Psoas muscle (tissue), 8 donors: ENCODE measurements at regions of chr9 and their contacts with region 1.

Region 1: GRCh38 chr9:34413231-34413852 is 36.6 kb upstream of the MYORG start:
- DNase-seq: peak in 1 of 2 donors; percentile 44
- ATAC-seq: peak in 3 of 4 donors; percentile 62 to 68 (median 64)
- H3K4me3 ChIP-seq: no peak overlapping the region
- H3K27ac ChIP-seq: no peak overlapping the region
- H3K4me1 ChIP-seq: peaks cover 4% of the 10 kb centered on the region
- H3K27me3 ChIP-seq: no peaks in the 10 kb centered on the region
- CTCF ChIP-seq: no peak

Region 2: DNA sequence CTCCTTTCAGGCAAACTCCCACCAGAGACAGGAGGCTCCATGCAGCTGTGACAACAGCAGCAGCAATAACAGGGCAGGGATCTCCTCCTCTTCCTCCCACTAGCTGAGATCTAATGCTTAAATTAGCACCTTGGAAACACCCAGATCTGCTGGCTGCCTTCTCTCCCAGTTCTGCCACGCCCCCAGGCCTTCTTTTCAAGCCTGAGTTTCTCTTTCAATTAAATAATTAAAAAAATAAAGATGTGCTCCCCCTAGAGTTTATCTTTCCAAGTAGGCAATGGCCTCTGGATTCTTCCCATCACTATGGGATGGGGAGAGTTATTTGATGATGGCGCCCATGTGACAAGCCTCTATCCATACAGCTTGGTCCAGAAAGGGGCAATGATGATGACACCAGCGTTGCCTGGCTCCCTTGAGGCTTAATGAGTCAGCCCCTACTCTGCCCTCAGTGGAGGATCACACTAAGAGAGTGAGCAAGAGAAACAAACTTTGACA is 41.3 kb after region 1 on chr9:
- intact Hi-C with region 1: loop called in 1 of 2 experiments (anchors 5 kb)
- DNase-seq: peak; percentile 56 to 68
- ATAC-seq: peak in 3 of 4 donors; percentile 41 to 69 (median 55)
- H3K4me3 ChIP-seq: no peak overlapping the region
- H3K27ac ChIP-seq: peak overlapping the region; percentile 91
- H3K4me1 ChIP-seq: peaks cover 82% of the 10 kb centered on the region
- H3K27me3 ChIP-seq: no peaks in the 10 kb centered on the region
- CTCF ChIP-seq: peak; percentile 21